ENCODE measurements at regions of chr15 and their contacts with region 1.

Region 1: DNA sequence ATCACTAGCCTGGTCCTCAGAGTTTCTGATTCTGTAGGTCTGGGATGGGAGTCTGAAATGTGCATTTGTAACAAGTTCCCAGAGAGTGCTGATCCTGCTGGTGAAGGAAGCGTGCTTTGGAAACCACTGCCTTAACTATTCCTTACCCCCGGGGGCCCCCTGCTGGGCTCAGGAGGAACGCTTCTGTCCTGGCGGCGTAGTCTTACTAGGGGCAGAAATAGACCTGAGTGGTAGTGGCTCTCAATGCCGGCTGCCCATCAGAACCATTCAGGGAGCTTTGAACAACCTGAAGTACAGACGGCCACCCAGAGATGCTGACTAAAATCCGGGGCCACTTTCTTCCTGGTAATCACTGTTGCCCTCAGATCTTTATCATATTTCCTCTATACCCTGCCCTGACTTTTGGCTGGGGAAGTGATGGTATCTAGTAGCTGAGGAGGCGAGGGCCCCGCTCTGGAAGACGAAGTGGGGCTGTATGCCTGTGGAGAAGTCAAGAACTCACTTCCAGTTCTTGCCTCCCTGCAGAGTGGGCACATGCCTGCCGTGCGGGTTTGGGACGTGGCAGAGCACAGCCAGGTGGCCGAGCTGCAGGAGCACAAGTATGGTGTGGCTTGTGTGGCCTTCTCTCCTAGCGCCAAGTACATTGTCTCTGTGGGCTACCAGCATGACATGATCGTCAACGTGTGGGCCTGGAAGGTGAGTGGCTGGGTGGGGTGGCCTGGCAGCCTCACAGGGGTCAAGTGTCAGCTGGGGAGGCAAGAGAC is 16.3 kb upstream of the JMJD7 start:
- DNase-seq: peak; percentile 84
- H3K4me3 Mint-ChIP-seq: no peak overlapping the region
- H3K27ac Mint-ChIP-seq: no peak overlapping the region
- H3K4me1 Mint-ChIP-seq: peaks cover 10% of the 10 kb centered on the region
- H3K27me3 Mint-ChIP-seq: no peaks in the 10 kb centered on the region

Region 2: DNA sequence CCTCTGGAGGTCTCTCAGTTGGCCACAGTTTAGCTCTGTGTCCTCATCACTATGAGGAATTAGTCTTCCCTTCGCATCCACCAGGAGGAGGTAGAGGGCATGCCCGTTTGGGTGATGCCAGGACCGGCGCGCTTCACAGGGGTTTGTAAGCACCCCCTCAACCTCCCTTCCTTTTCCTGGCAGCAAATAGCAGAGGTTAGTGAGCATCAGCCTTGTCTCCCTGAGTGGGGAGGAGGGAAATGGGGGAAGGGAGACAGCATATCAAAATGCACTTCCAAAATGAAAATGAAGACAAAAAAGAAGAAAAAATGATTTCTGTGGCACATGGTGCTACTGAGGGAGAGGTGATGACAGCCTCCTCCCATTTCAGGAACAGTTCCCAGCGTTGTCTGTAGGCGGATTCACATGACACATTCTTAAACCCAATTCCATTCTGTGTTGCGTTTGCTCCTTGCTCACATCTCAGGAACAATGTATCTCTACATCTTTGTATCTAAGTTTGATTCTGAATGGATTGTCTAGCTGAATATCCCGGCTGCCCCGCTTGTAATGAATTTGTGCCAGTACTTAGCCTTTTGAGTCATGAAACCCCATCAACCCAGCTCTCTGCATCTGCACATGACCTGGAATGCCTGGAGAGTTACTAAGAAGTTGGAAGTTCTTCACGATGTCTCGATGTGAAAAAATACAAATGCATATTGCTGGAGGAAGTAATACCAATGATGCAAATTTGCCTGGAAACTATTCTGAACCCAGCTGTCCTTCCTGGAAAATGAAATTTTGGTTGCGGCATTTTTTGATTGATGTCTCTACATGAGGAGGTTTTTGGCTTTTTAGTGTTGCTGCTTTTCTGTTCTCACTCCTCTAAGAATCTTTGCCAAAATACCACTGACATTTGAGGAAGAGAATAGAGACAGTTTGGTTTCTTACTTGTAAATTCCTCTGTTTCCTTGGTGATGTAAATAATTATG is 207.4 kb before region 1 on chr15:
- CTCF ChIA-PET with region 1: interaction called, 40 read pairs
- POLR2A ChIA-PET with region 1: no interaction called
- intact Hi-C with region 1: loop called (anchors 5 kb)
- DNase-seq: peak; percentile 64
- H3K4me3 Mint-ChIP-seq: peak overlapping the region; percentile 60
- H3K27ac Mint-ChIP-seq: no peak overlapping the region
- H3K4me1 Mint-ChIP-seq: peaks cover 11% of the 10 kb centered on the region
- H3K27me3 Mint-ChIP-seq: peaks cover 10% of the 10 kb centered on the region

Region 3: GRCh38 chr15:41683955-41684354 is 127.7 kb before region 1 on chr15:
- CTCF ChIA-PET with region 1: no interaction called
- POLR2A ChIA-PET with region 1: no interaction called
- intact Hi-C with region 1: no loop called
- DNase-seq: no peak
- H3K4me3 Mint-ChIP-seq: no peak overlapping the region
- H3K27ac Mint-ChIP-seq: no peak overlapping the region
- H3K4me1 Mint-ChIP-seq: peaks cover 52% of the 10 kb centered on the region
- H3K27me3 Mint-ChIP-seq: no peaks in the 10 kb centered on the region

Region 4: GRCh38 chr15:41695750-41696426 is 115.7 kb before region 1 on chr15:
- CTCF ChIA-PET with region 1: interaction called, 13 read pairs
- POLR2A ChIA-PET with region 1: no interaction called
- intact Hi-C with region 1: loop called (anchors 1 kb)
- DNase-seq: peak; percentile 66
- H3K4me3 Mint-ChIP-seq: peak overlapping the region; percentile 10
- H3K27ac Mint-ChIP-seq: peak overlapping the region; percentile 70
- H3K4me1 Mint-ChIP-seq: peaks cover 47% of the 10 kb centered on the region
- H3K27me3 Mint-ChIP-seq: no peaks in the 10 kb centered on the region

Region 5: DNA sequence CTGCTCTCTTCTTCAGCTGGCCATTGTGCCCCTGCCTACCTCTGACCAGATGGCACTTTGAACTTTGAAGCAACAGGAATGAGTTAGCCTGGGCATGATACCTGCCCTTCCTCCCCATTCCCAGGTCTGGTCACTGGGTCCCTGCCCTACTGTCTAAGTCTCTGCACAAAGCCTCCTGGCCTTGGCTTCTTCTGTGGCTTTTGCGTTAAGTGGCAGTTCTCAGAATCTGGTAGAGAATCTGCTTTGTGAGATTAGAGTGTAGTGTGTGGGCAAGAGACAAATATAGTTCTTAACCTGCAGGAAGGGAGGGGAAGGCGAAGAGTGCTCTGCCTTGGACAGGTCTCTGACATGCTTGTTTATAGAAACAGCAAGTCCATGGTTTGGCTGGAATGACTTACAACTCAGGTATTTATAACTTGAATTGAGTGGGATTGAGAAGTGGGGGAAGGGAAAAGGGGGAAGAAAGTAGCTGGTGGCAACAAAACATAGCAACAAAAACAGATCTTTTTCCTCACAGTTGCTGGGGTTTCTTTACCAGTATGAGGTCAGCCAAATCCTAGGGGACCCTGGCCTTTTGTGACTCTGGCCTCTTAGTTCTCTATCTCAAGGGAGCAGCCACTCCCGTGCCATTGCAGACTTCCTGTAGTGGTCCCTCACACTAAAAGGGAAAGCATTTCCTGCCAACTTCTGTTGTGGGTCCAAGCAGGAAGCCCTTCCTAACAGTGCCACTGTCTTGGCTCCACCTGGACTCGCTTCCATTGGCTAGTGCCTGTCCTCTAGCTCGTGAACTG is 20.7 kb before region 1 on chr15:
- CTCF ChIA-PET with region 1: interaction called, 19 read pairs
- POLR2A ChIA-PET with region 1: no interaction called
- intact Hi-C with region 1: no loop called
- DNase-seq: no peak
- H3K4me3 Mint-ChIP-seq: no peak overlapping the region
- H3K27ac Mint-ChIP-seq: no peak overlapping the region
- H3K4me1 Mint-ChIP-seq: peaks cover 33% of the 10 kb centered on the region
- H3K27me3 Mint-ChIP-seq: no peaks in the 10 kb centered on the region

Region 6: DNA sequence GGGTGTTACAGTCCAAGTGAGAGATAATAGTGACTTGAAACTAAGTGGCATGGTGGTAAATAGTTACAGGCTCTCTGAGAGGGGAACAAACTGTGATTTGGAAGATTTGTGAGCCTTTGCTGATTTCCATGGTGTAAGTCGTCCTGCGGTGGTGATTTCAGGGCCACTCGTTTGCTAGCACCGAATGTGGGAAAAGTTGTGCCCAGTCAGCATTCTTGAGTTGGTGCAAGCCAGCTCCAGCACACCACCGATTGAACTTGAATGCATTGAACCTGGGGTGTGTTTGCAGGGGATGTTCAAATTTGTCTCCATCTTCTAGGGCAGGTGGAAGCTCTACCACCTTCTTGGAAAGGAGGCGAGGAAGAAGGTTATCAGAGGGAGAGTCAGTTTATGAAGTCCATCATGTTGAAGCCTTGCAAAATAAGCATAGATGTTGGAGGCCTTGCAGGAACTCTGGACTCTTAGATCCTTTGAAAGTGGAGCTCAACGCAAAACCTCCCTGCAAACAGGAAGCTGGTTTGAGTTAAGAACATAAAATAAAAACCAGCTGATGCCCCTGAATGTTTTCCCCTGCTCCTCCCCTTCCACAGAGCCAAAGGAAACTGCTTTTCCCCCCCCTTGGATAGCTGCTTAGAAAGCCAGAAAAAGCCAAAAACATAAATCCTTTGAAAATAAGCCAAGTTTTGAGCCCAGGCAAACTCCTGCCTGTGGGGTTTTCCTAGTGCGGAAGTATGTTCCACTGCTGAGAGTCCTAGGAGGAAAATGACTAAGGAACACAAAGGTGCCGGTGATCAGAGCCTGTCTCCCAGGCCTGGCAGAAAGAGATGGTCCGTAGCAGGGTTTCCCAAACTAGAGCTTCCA is 15.4 kb before region 1 on chr15:
- CTCF ChIA-PET with region 1: interaction called, 19 read pairs
- POLR2A ChIA-PET with region 1: no interaction called
- intact Hi-C with region 1: no loop called
- DNase-seq: no peak
- H3K4me3 Mint-ChIP-seq: no peak overlapping the region
- H3K27ac Mint-ChIP-seq: no peak overlapping the region
- H3K4me1 Mint-ChIP-seq: peaks cover 16% of the 10 kb centered on the region
- H3K27me3 Mint-ChIP-seq: no peaks in the 10 kb centered on the region

Region 7: DNA sequence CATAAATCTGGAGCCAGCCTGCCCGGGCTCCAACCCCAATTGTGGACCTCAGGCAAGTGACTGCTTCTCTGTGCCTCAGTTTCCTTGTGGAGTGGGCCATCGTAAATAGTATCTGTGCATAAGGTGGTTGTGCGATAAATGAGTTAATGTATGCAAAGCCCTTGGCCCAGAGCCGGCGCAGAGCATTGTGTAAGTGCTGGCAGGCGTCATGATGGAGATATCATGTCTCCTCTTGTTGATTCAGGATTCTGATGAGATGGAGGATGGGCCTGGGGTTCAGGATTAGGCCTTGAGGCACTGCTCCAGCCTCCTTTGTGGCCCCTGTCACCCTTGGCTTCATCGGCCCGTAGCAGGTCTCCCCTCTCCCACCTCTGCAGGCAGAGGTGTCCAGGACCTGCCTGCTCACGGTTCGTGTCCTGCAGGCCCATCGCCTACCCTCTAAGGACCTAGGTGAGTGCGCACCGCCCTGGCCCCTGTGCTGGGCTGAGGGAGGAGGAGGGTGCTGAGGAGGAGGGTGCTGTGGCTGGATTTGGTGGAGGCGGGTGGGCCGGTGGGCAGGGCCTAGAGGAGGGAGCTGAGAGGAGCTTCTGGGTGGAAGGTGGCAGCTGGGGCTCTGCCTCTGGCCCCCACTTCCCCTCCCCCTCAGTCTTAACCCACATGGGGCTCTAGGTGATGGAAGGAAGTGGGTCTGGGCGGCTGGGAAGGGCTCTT is 28.3 kb after region 1 on chr15:
- CTCF ChIA-PET with region 1: no interaction called
- POLR2A ChIA-PET with region 1: no interaction called
- intact Hi-C with region 1: no loop called
- DNase-seq: no peak
- H3K4me3 Mint-ChIP-seq: no peak overlapping the region
- H3K27ac Mint-ChIP-seq: no peak overlapping the region
- H3K4me1 Mint-ChIP-seq: peaks cover 4% of the 10 kb centered on the region
- H3K27me3 Mint-ChIP-seq: no peaks in the 10 kb centered on the region

Region 8: DNA sequence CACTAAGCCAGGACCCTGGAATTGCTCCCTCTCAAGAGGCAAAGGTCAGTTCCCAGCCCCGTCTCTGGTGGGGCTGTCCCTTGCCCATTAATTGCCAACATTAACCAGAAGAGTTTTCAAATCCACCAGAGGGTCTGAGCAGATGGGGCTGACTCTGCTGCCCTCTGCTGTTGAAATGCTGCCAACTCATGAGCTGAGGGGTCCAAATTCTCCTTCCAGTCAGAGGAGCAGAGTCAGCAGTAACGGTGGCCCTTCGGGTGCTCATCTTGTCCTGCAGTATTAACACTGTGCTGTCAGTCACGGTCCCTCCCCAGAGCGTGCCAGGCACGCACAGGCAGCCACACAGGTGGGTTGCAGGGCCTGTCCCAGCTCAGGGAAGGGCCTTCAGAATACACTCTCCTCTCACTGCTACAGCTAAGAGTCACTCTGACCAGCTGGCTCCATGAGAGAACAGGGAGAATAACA is 93.0 kb after region 1 on chr15:
- CTCF ChIA-PET with region 1: interaction called, 16 read pairs
- POLR2A ChIA-PET with region 1: no interaction called
- intact Hi-C with region 1: no loop called
- DNase-seq: peak; percentile 81
- H3K4me3 Mint-ChIP-seq: no peak overlapping the region
- H3K27ac Mint-ChIP-seq: peak overlapping the region; percentile 54
- H3K4me1 Mint-ChIP-seq: peaks cover 9% of the 10 kb centered on the region
- H3K27me3 Mint-ChIP-seq: no peaks in the 10 kb centered on the region

Region 9: GRCh38 chr15:41917767-41918430 is 106.3 kb after region 1 on chr15:
- CTCF ChIA-PET with region 1: no interaction called
- POLR2A ChIA-PET with region 1: no interaction called
- intact Hi-C with region 1: no loop called
- DNase-seq: no peak
- H3K4me3 Mint-ChIP-seq: no peak overlapping the region
- H3K27ac Mint-ChIP-seq: no peak overlapping the region
- H3K4me1 Mint-ChIP-seq: peaks cover 5% of the 10 kb centered on the region
- H3K27me3 Mint-ChIP-seq: no peaks in the 10 kb centered on the region

Region 10: DNA sequence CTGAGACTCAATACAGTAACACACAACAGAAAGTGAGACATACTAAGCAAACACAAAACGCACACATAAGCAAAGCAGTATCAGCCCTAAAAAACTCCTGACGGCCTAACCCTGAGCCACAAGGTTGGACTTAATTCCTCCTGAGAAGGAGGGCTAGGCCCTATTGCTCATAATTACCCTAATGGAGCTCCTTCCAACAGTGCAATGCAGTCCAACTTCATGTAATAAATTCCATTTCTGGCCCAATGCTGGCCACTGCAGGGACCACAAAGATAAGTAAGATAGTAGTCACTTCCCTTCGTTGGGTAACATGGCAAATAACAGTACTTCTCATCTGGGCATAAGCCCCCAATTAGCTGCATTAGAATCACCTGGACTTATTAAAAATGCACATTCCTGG is 392.3 kb after region 1 on chr15:
- CTCF ChIA-PET with region 1: no interaction called
- POLR2A ChIA-PET with region 1: no interaction called
- intact Hi-C with region 1: no loop called
- DNase-seq: no peak
- H3K4me3 Mint-ChIP-seq: no peak overlapping the region
- H3K27ac Mint-ChIP-seq: no peak overlapping the region
- H3K4me1 Mint-ChIP-seq: peaks cover 50% of the 10 kb centered on the region
- H3K27me3 Mint-ChIP-seq: no peaks in the 10 kb centered on the region